ENCODE measurements at regions of chr9 and their contacts with region 1.

Region 1: DNA sequence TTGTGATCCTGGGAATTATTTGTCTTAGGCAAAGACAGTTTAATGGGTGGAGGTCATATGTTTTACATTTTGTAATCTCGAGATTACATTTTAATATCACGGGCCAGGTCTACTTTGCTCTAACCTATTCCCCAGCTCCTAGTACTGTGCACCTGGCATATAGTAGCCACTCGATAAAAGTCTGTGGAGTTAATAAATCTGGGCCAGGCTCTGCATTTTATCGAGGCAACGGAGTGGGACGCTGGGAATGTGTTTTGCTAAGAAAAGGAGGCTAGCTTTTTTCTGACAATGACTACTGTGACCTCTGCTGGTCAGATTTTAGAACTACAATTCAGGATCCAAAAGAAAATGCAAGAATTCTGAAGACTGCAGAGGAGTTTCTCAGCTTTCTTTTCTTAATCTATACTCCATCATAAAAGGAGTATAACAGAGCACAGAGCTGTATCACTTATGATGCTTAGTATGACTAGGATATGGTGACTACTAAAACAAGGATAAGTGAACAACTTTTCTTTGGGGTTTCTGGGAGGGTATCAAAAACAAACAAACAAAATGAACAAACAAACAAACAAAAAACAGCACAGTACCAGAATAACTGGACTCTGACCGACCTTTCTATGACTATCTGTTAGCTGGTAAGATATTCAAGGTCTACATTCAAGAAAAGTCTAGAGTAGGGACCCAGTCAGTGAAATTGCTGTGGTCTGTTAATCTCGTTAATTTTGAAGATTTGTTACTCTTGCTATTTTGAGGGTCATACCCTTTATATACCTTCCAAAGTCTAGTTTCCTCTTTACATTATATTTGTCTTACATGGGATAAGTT is 46.1 kb upstream of the CER1 start:
- DNase-seq: no peak
- H3K4me3 ChIP-seq: no peak overlapping the region
- CTCF ChIP-seq: peak in 1 of 3 donors; percentile 39
- POLR2A ChIP-seq: no peak

Region 2: GRCh38 chr9:14616188-14616982 is 152.2 kb before region 1 on chr9:
- intact Hi-C with region 1: loop called (anchors 5 kb)
- DNase-seq: no peak
- H3K4me3 ChIP-seq: no peak overlapping the region
- CTCF ChIP-seq: no peak
- POLR2A ChIP-seq: no peak

Region 3: DNA sequence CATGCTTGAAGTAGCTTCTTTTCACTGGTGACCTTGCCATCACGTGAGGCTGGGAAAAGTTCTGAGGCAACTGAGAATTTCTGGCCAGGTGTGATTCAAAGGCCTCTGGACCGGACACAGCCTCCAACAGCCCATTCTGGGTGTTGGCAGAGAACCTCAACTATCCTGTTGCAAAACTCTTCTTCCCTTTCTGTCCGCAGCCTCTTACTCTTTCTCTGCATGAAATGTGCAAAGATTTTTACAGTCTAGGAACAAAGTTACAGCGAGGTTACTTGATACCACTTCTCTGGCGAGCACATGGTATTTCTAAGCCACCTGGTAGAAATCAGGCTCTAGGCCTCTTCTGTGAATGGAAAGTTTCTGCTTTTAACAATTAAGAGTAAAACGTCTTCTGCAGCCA is 62.5 kb after region 1 on chr9:
- intact Hi-C with region 1: no loop called
- DNase-seq: no peak
- H3K4me3 ChIP-seq: no peak overlapping the region
- CTCF ChIP-seq: no peak
- POLR2A ChIP-seq: no peak

Region 4: GRCh38 chr9:15155826-15156225 is 387.2 kb after region 1 on chr9:
- intact Hi-C with region 1: no loop called
- DNase-seq: peak in 1 of 2 donors; percentile 31
- H3K4me3 ChIP-seq: no peak overlapping the region
- CTCF ChIP-seq: no peak
- POLR2A ChIP-seq: no peak

Region 5: GRCh38 chr9:16046713-16047112 is 1278.1 kb after region 1 on chr9:
- intact Hi-C with region 1: no loop called
- DNase-seq: no peak
- H3K4me3 ChIP-seq: no peak overlapping the region
- CTCF ChIP-seq: no peak
- POLR2A ChIP-seq: no peak

Region 6: GRCh38 chr9:16289639-16290038 is 1521.0 kb after region 1 on chr9:
- intact Hi-C with region 1: loop called (anchors 5 kb)
- DNase-seq: no peak
- H3K4me3 ChIP-seq: no peak overlapping the region
- CTCF ChIP-seq: no peak
- POLR2A ChIP-seq: no peak